ENCODE measurements at regions of chr3 and their contacts with region 1.

Region 1: DNA sequence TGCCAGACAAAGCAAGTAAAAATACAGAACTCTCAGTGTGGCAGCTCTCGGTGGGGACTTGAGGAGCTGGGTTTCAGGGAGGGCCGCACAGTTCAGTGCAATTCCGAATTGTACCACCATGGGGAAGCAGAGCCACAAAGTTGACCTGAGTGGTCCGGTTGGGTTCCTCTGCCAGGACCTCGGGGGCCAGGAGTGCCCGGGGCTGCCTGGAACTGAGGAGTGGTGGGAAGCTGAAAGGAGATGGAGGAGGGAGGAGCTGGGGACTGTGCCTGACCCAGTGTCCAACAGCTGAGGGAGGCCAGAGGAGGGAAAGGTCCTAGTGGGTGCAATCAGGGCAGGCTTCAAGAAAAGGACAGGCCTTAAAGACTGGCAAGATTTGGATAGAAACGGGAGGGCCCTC is 32.2 kb upstream of the TRH start:
- DNase-seq: peak; percentile 65
- H3K4me3 ChIP-seq: no peak overlapping the region
- H3K27ac ChIP-seq: no peak overlapping the region
- H3K4me1 ChIP-seq: peaks cover 6% of the 10 kb centered on the region
- H3K27me3 ChIP-seq: no peaks in the 10 kb centered on the region
- CTCF ChIP-seq: peak; percentile 79

Region 2: GRCh38 chr3:129768728-129769127 is 173.6 kb before region 1 on chr3:
- CTCF ChIA-PET with region 1: no interaction called
- POLR2A ChIA-PET with region 1: no interaction called
- intact Hi-C with region 1: no loop called
- DNase-seq: no peak
- H3K4me3 ChIP-seq: no peak overlapping the region
- H3K27ac ChIP-seq: no peak overlapping the region
- H3K4me1 ChIP-seq: no peaks in the 10 kb centered on the region
- H3K27me3 ChIP-seq: no peaks in the 10 kb centered on the region
- CTCF ChIP-seq: no peak

Region 3: DNA sequence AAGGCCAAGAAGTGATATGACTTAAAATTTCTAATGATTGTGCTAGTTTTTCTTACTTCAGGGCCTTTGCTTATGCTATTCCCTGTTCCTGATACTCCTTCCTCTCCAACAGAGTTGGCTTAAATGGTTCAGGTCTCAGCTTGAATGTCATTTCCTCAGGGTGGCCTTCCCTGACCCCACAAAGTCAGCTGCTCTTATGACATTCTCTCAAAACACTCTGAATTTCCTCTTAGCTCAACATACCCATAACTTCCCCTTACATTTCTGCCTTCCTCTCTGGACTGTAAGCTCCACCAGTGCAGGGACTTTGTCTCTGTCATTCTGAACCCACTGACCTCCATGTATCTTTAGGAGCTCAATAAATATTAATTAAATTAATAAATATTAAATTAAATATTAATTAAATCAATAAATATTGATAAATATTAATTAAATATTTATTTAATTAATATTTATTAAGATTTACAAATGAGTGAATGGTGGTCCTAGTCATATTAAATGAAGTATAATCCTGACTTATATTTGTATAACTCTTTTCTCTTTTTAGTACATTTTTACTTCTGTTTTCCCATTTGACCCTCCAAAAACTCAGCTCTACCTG is 30.9 kb before region 1 on chr3:
- CTCF ChIA-PET with region 1: no interaction called
- POLR2A ChIA-PET with region 1: interaction called, 11 read pairs
- intact Hi-C with region 1: no loop called
- DNase-seq: no peak
- H3K4me3 ChIP-seq: no peak overlapping the region
- H3K27ac ChIP-seq: no peak overlapping the region
- H3K4me1 ChIP-seq: no peaks in the 10 kb centered on the region
- H3K27me3 ChIP-seq: no peaks in the 10 kb centered on the region
- CTCF ChIP-seq: no peak